Psoas muscle (tissue), 8 donors: ENCODE measurements at regions of chr9 and their contacts with region 1.

Region 1: DNA sequence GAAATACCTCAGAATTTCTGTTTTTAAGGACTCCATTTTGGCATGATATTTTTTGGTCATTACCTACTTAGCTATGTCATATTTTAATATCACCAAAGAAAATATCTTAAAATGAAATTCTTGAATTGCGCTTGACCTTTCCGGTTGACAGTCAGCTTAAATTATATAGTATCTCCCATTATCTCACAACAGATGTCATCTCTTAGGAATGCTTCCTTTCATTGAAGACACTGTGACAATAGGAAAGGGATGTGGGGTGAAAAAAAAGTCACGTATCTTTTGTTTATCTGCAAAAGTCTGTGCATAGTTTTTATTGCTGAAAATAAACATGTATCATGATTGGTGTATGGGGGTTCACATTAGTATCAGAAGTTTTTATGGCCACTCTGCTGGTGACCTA is 105.8 kb downstream of the INVS start:
- DNase-seq: no peak
- ATAC-seq: no peak
- H3K4me3 ChIP-seq: no peak overlapping the region
- H3K27ac ChIP-seq: no peak overlapping the region
- H3K4me1 ChIP-seq: no peaks in the 10 kb centered on the region
- H3K27me3 ChIP-seq: no peaks in the 10 kb centered on the region
- CTCF ChIP-seq: no peak

Region 2: DNA sequence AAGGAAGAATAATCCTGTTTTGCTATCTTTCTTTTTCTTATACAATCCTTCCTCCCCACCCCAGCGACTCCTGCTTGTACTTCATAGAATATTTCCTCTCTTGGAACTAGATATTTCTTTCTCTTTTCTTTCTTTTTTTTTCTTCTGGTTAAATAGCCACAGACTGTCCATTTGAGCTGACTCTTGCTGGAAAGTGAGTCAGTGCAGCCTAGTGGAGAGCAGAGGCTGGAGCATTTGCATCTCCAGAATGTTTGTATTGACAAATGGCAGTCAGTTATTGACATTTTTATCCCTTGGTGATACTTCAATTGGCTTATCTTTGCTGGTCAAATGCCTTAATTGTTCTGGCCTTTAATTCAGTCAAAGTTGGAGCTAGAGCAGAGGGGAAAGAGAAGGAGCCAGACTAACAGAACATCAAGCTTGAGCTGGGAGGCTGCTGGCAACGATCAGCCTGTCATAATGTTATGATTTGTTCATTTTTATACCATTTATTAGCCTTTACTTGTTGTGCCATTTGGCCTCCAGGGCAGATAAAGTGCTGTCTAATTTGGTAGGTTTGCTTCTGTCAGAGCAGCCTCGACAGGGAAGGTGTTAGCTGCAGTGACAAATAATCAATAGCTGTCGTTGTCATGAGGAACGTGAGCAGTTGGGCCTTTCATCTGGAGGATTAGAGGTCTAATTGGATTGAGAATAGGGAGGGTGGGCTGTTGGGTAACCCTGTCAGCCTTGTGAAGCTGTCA is 36.7 kb before region 1 on chr9:
- intact Hi-C with region 1: loop called in 1 of 2 experiments (anchors 5 kb)
- DNase-seq: no peak
- ATAC-seq: no peak
- H3K4me3 ChIP-seq: no peak overlapping the region
- H3K27ac ChIP-seq: no peak overlapping the region
- H3K4me1 ChIP-seq: no peaks in the 10 kb centered on the region
- H3K27me3 ChIP-seq: no peaks in the 10 kb centered on the region
- CTCF ChIP-seq: no peak

Region 3: GRCh38 chr9:100216178-100216787 is 11.5 kb after region 1 on chr9:
- intact Hi-C with region 1: no loop called
- DNase-seq: peak; percentile 37 to 55
- ATAC-seq: peak; percentile 43 to 89 (median 82)
- H3K4me3 ChIP-seq: no peak overlapping the region
- H3K27ac ChIP-seq: no peak overlapping the region
- H3K4me1 ChIP-seq: peaks cover 2% of the 10 kb centered on the region
- H3K27me3 ChIP-seq: no peaks in the 10 kb centered on the region
- CTCF ChIP-seq: peak; percentile 63